ENCODE measurements at regions of chr17 and their contacts with region 1.

Region 1: DNA sequence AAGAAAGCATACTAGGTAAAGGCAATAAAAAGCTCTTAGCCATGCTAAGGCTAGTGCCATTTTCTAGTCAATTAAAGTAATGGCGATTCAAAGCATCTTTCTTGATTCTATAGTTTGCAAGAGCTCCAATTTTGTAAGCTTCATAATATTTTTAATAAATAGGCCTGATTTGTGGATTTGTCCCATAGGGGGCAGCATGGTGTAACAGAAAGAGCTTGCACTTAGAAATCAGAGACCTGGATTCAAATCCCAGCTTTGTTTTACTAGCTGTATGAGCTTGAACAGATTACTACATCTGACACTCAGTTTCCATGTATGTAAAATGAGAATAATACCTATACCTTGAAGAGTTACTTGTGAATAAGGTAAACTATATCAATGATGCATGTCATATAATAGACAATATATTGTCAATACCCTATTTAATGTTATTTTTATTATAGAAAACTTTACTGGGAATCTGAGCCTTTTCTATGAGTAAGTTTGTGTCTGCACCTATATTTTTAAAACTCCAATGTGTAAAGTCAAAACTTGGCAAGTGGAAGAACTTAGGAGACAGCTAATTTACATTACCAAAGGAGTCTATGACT is 93.6 kb upstream of the NOG start:
- DNase-seq: peak; percentile 47
- H3K4me3 ChIP-seq: no peak overlapping the region
- H3K27ac ChIP-seq: no peak overlapping the region
- H3K4me1 ChIP-seq: no peaks in the 10 kb centered on the region
- H3K27me3 ChIP-seq: peaks cover 2 to 9% of the 10 kb centered on the region in 2 experiments
- CTCF ChIP-seq: peak; percentile 25 to 33
- POLR2A ChIP-seq: no peak

Region 2: GRCh38 chr17:56313201-56313600 is 186.7 kb before region 1 on chr17:
- CTCF ChIA-PET with region 1: no interaction called
- POLR2A ChIA-PET with region 1: no interaction called
- dilution Hi-C with region 1: no loop called
- intact Hi-C with region 1: no loop called
- DNase-seq: no peak
- H3K4me3 ChIP-seq: no peak overlapping the region
- H3K27ac ChIP-seq: no peak overlapping the region
- H3K4me1 ChIP-seq: peaks cover 13% of the 10 kb centered on the region
- H3K27me3 ChIP-seq: peaks cover 8 to 11% of the 10 kb centered on the region in 2 experiments
- CTCF ChIP-seq: no peak
- POLR2A ChIP-seq: no peak

Region 3: DNA sequence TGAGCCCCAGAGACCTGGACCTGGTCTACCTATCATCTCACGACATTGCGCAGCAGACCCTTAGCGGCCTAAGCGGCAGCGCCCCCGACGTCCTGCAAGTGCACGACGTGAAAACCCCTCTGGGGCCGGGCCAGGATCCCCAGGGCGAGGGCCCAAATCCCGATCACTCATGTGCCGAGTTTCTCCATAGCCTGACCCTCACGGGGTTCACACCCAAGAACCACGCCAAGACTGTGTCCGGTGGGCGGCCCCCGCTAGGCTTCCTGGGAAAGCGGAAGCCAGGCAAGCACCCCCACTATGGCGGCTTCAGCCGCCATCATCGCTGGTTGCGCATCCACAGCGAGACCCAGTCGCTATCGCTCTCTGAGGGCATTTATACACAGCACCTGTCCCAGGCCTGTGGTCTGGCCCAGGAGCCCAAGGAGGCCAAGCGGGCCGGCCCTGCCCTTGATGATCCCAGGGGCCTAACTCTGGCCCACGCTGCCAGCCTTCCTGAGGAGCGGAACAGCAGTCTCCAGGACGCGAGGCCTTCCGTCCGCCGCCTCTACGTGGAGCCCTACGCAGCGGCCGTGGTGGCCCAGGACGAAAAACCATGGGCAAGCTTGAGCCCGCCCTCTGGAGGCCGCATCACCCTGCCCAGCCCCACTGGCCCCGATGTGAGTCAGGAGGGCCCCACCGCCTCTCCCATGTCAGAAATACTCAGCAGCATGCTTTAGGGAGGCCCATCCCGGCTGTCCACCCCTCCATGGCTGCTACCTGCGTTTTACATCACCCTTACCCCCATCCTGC is 10.9 kb after region 1 on chr17:
- CTCF ChIA-PET with region 1: interaction called, 21 read pairs
- POLR2A ChIA-PET with region 1: no interaction called
- dilution Hi-C with region 1: no loop called
- intact Hi-C with region 1: no loop called
- DNase-seq: no peak
- H3K4me3 ChIP-seq: no peak overlapping the region
- H3K27ac ChIP-seq: no peak overlapping the region
- H3K4me1 ChIP-seq: no peaks in the 10 kb centered on the region
- H3K27me3 ChIP-seq: peaks cover 0 to 4% of the 10 kb centered on the region in 2 experiments
- CTCF ChIP-seq: no peak
- POLR2A ChIP-seq: no peak

Region 4: DNA sequence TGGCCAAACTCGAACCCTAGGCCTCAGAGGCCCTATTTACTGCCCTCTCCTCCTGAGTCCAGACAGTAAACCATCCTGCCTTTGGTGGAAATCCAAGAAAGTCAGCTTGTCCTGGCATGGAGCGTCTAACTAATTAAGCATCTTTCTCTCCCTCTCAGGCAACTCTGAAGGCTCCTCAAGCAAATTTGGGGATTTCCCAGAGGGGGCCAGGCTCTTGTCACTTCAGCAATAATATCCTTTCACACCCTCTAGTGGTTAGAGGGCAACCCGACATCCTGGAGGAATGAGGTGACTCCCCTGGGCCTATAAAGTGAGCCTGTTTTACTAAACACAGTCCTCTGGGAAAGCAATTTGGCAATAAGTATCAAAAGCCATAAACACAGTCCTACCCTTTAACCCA is 154.0 kb after region 1 on chr17:
- CTCF ChIA-PET with region 1: interaction called, 7 read pairs
- POLR2A ChIA-PET with region 1: no interaction called
- dilution Hi-C with region 1: no loop called
- intact Hi-C with region 1: loop called (anchors 2 kb)
- DNase-seq: peak; percentile 33
- H3K4me3 ChIP-seq: no peak overlapping the region
- H3K27ac ChIP-seq: no peak overlapping the region
- H3K4me1 ChIP-seq: no peaks in the 10 kb centered on the region
- H3K27me3 ChIP-seq: peaks cover under 1 to 8% of the 10 kb centered on the region in 2 experiments
- CTCF ChIP-seq: peak; percentile 27 to 33
- POLR2A ChIP-seq: no peak

Region 5: DNA sequence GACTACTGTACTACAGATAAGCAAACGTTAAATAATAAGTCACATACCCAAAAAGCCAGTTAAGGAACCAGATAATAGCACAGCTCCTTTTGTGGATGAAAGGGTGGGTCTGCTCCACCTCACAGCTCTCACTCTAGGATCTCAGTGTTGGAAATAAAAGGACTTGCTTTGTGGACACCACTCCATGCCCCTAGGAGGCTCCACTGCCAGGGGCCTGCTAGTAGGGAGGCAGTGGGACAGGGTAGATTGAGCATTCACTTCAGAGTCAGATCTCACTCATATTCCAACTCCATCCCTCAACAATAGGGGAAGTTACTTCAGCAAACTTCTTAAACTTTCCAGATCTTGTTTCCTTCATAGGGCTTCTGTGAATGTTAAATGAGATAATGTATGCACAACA is 227.3 kb after region 1 on chr17:
- CTCF ChIA-PET with region 1: no interaction called
- POLR2A ChIA-PET with region 1: no interaction called
- dilution Hi-C with region 1: no loop called
- intact Hi-C with region 1: no loop called
- DNase-seq: no peak
- H3K4me3 ChIP-seq: no peak overlapping the region
- H3K27ac ChIP-seq: no peak overlapping the region
- H3K4me1 ChIP-seq: no peaks in the 10 kb centered on the region
- H3K27me3 ChIP-seq: no peaks in the 10 kb centered on the region
- CTCF ChIP-seq: no peak
- POLR2A ChIP-seq: no peak

Region 6: DNA sequence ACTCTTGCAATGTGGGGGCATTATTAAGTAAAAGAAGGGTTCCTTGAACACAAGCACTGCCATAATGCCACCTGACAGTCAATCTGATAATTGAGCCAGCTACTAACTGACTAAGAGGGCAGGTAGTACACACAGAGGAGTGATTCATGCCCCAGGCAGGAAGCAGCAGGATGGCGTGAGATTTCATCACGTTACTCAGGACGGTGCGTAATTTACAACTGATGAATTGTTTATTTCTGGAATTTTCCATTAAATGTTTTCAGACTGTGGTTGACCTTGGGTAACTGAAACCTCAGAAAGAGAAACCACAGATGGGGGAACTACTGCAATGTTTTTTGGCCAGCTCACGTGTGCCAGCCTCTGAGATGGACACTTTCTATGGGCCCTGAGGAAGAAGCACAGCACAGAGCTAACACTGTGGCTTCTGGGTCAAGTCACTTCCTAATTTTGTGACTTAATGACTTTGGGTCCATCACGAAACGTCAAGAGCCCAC is 287.1 kb after region 1 on chr17:
- CTCF ChIA-PET with region 1: interaction called, 12 read pairs
- POLR2A ChIA-PET with region 1: no interaction called
- dilution Hi-C with region 1: no loop called
- intact Hi-C with region 1: no loop called
- DNase-seq: peak; percentile 83
- H3K4me3 ChIP-seq: no peak overlapping the region
- H3K27ac ChIP-seq: peak overlapping the region; percentile 63
- H3K4me1 ChIP-seq: peaks cover 13% of the 10 kb centered on the region
- H3K27me3 ChIP-seq: no peaks in the 10 kb centered on the region
- CTCF ChIP-seq: no peak
- POLR2A ChIP-seq: no peak

Region 7: DNA sequence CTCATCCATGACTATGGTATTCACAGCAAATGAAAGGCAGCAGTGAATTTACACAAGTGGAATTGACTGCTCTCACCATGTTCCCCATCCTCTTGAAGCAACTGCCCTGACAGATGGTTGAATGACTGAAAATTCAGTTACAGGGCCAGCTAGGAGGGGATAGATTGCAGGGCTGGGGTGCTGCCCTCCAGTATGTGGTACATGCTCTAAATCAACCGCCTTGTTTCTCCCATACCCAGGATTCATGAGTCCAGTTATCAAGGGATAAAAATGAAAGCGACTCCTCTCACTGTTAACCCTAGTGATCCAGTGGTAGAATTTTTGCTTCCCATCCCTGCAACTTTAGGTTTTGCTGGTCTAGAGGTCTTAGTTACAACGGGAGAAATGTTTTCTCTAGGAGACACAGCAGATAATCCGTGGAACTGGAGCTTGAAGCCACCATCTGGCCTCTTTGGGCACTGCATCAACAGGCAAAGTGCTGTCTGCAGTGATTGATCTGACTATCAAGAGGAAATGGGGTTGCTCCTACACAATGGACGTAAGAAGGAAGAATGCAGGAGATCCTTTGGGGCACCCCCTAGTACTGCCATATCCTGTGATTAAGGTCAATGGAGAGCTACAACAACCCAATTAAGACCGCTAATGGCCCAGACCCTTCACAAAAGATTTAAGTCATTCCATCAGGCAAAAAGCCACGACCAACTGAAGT is 510.0 kb after region 1 on chr17:
- CTCF ChIA-PET with region 1: interaction called, 19 read pairs
- POLR2A ChIA-PET with region 1: no interaction called
- dilution Hi-C with region 1: no loop called
- intact Hi-C with region 1: no loop called
- DNase-seq: peak; percentile 73
- H3K4me3 ChIP-seq: no peak overlapping the region
- H3K27ac ChIP-seq: no peak overlapping the region
- H3K4me1 ChIP-seq: peaks cover 4% of the 10 kb centered on the region
- H3K27me3 ChIP-seq: peaks cover 3 to 6% of the 10 kb centered on the region in 2 experiments
- CTCF ChIP-seq: peak; percentile 66 to 73
- POLR2A ChIP-seq: no peak

Measured in endothelial cell of umbilical vein (primary cell).